H1 (cell line): ENCODE measurements at regions of chr14 and their contacts with region 1.

Region 1: GRCh38 chr14:63524537-63525155 is 18.5 kb downstream of the PPP2R5E start:
- DNase-seq: no peak
- H3K4me3 ChIP-seq: no peak overlapping the region
- H3K27ac ChIP-seq: no peak overlapping the region
- H3K4me1 ChIP-seq: no peaks in the 10 kb centered on the region
- H3K27me3 ChIP-seq: no peaks in the 10 kb centered on the region
- CTCF ChIP-seq: no peak
- EP300 ChIP-seq: no peak
- POLR2A ChIP-seq: no peak
- RAD21 ChIP-seq: no peak

Region 2: DNA sequence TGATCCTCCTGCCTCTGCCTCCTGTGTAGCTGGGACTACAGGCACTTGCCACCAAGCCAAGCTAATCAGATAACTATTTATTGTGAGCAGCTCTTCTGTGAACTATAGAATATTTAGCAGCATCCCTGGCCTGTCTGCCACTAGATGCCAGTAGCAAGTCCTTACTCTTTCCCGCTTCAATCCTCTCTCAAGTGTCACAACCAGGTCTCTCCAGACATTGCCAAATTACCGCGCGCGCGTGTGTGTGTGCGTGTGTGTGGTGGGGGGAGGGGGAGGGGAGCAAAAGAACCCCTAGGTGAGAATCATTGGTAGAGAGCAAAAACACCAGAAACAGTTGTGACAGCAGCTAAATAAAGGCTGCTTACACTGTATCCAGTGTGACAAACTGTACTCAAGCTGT is 31.4 kb before region 1 on chr14:
- CTCF ChIA-PET with region 1: interaction called, 11 read pairs
- POLR2A ChIA-PET with region 1: no interaction called
- DNase-seq: no peak
- H3K4me3 ChIP-seq: no peak overlapping the region
- H3K27ac ChIP-seq: no peak overlapping the region
- H3K4me1 ChIP-seq: peaks cover 1 to 7% (median 5%) of the 10 kb centered on the region in 4 experiments; a peak in 6 of 7 replicates
- H3K27me3 ChIP-seq: no peaks in the 10 kb centered on the region
- CTCF ChIP-seq: peak in 2 of 3 experiments; percentile 15 to 24; a peak in 1 of 4 replicates
- EP300 ChIP-seq: no peak
- POLR2A ChIP-seq: no peak
- RAD21 ChIP-seq: peak in 1 of 2 experiments; percentile 32; a peak in 2 of 4 replicates

Region 3: DNA sequence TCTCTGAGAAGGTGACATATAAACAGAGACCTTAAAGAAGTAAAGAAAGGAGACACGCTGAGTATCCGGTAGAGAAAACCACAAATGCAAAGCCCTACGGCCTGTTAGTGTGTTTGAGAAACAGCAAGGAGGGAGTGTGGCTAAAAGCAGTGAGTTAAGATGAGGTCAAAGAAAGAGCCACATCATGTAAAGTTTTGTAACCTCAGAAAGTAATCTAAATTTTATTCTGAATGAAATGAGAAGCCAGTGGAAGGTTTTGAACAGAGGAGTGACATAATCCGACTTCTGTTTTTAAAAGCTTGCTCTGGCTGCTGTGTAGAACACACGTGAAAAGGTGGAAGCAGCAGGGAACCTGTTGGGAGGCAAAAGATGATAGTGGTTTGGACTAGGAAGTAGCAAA is 14.1 kb before region 1 on chr14:
- CTCF ChIA-PET with region 1: no interaction called
- POLR2A ChIA-PET with region 1: no interaction called
- DNase-seq: no peak
- H3K4me3 ChIP-seq: no peak overlapping the region
- H3K27ac ChIP-seq: no peak overlapping the region
- H3K4me1 ChIP-seq: peaks cover 0 to 4% (median 2%) of the 10 kb centered on the region in 4 experiments; a peak in 4 of 7 replicates
- H3K27me3 ChIP-seq: no peaks in the 10 kb centered on the region
- CTCF ChIP-seq: no peak
- EP300 ChIP-seq: no peak
- POLR2A ChIP-seq: no peak
- RAD21 ChIP-seq: no peak